Lower leg skin (tissue), 4 donors: ENCODE measurements at regions of chr2 and their contacts with region 1.

Region 1: DNA sequence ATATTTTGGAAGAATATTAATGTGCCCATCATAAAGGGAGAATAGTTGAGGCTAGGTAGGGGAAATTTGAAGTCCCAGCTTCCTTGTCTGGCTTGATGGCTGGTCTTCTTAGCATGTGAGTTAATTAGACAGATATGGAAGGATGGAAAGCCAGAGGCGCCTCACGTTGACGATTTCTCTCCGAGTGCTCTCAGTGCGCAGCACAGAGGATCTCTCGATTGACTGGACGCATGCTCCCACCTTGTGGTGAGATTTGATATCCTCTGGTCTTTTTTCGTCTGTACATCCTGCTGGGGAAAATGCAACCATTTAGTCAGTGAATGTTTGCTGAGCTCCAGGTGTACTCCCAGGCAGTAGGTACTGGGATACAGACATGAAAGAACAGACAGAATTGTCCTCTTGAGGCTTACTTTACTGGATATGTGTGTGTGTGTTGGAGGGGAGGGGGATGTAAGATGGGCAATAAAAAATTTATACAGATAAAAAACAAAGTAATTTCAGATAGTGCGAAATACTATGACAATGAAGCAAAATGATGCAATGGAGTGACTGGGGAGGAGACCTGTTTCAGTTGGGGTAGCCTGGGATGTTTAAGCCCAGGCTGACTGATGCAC is 66.9 kb upstream of the ZNG1B start:
- DNase-seq: peak; percentile 70 to 88
- H3K4me3 ChIP-seq: no peak overlapping the region
- CTCF ChIP-seq: peak in 1 of 3 donors; percentile 58
- POLR2A ChIP-seq: no peak

Region 2: GRCh38 chr2:112173646-112174319 is 1196.8 kb before region 1 on chr2:
- intact Hi-C with region 1: no loop called
- DNase-seq: peak in 1 of 2 donors; percentile 64
- H3K4me3 ChIP-seq: no peak overlapping the region
- CTCF ChIP-seq: no peak
- POLR2A ChIP-seq: no peak

Region 3: GRCh38 chr2:113203901-113204519 is 166.6 kb before region 1 on chr2:
- intact Hi-C with region 1: loop called (anchors 5 kb)
- DNase-seq: peak; percentile 66 to 94
- H3K4me3 ChIP-seq: no peak overlapping the region
- CTCF ChIP-seq: peak in 1 of 3 donors; percentile 55
- POLR2A ChIP-seq: no peak

Region 4: GRCh38 chr2:113248997-113249770 is 121.4 kb before region 1 on chr2:
- intact Hi-C with region 1: loop called (anchors 2 kb)
- DNase-seq: peak; percentile 77 to 96
- H3K4me3 ChIP-seq: no peak overlapping the region
- CTCF ChIP-seq: peak in 1 of 3 donors; percentile 95
- POLR2A ChIP-seq: no peak